Body of pancreas (tissue), 4 donors: ENCODE measurements at regions of chr9 and their contacts with region 1.

Region 1: GRCh38 chr9:77131399-77131798 is 45.9 kb upstream of the VPS13A start:
- DNase-seq: no peak
- ATAC-seq: no peak
- H3K4me3 ChIP-seq: no peak overlapping the region
- H3K27ac ChIP-seq: no peak overlapping the region
- H3K4me1 ChIP-seq: no peaks in the 10 kb centered on the region
- H3K27me3 ChIP-seq: no peaks in the 10 kb centered on the region
- CTCF ChIP-seq: no peak
- POLR2A ChIP-seq: no peak

Region 2: GRCh38 chr9:76798527-76798926 is 332.9 kb before region 1 on chr9:
- intact Hi-C with region 1: loop called (anchors 10 kb)
- DNase-seq: no peak
- ATAC-seq: no peak
- H3K4me3 ChIP-seq: no peak overlapping the region
- H3K27ac ChIP-seq: no peak overlapping the region
- H3K4me1 ChIP-seq: no peaks in the 10 kb centered on the region
- H3K27me3 ChIP-seq: no peaks in the 10 kb centered on the region
- CTCF ChIP-seq: no peak
- POLR2A ChIP-seq: no peak